Left ventricle myocardium inferior (tissue), 1 donor: ENCODE measurements at regions of chr4 and their contacts with region 1.

Region 1: GRCh38 chr4:152640058-152640833 is 39.6 kb downstream of the TMEM154 start:
- DNase-seq: no peak
- H3K4me3 ChIP-seq: no peak overlapping the region
- H3K27ac ChIP-seq: no peak overlapping the region
- H3K4me1 ChIP-seq: peaks cover 15% of the 10 kb centered on the region
- H3K27me3 ChIP-seq: no peaks in the 10 kb centered on the region
- CTCF ChIP-seq: peak; percentile 63

Region 2: GRCh38 chr4:152278505-152279233 is 361.6 kb before region 1 on chr4:
- intact Hi-C with region 1: no loop called
- DNase-seq: no peak
- H3K4me3 ChIP-seq: no peak overlapping the region
- H3K27ac ChIP-seq: no peak overlapping the region
- H3K4me1 ChIP-seq: no peaks in the 10 kb centered on the region
- H3K27me3 ChIP-seq: no peaks in the 10 kb centered on the region
- CTCF ChIP-seq: no peak

Region 3: DNA sequence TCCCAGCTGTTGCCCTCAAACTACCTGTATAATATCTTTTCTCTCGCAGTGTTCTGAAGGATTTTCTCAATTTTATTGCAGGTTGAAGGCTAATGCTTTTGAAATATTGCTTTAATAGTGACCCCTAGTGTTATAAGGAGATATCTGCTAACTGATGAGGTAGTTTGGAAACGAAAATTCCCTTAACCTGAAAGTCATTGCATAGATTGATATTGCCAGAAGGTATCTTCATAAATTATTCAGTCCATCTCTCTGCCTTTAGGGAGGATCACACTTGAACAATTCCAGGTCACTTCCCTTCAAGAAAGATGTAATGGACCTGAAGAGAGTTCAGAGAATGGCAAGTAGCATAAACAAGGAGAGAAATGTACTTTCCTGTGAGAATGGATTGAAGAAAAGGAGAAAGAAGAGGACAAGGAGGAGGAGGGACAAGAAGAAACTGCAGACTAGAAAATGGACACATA is 95.2 kb after region 1 on chr4:
- intact Hi-C with region 1: loop called (anchors 10 kb)
- DNase-seq: no peak
- H3K4me3 ChIP-seq: no peak overlapping the region
- H3K27ac ChIP-seq: no peak overlapping the region
- H3K4me1 ChIP-seq: no peaks in the 10 kb centered on the region
- H3K27me3 ChIP-seq: no peaks in the 10 kb centered on the region
- CTCF ChIP-seq: peak; percentile 73